CD8-positive, alpha-beta T cell (primary cell): ENCODE measurements at regions of chr1 and their contacts with region 1.

Region 1: DNA sequence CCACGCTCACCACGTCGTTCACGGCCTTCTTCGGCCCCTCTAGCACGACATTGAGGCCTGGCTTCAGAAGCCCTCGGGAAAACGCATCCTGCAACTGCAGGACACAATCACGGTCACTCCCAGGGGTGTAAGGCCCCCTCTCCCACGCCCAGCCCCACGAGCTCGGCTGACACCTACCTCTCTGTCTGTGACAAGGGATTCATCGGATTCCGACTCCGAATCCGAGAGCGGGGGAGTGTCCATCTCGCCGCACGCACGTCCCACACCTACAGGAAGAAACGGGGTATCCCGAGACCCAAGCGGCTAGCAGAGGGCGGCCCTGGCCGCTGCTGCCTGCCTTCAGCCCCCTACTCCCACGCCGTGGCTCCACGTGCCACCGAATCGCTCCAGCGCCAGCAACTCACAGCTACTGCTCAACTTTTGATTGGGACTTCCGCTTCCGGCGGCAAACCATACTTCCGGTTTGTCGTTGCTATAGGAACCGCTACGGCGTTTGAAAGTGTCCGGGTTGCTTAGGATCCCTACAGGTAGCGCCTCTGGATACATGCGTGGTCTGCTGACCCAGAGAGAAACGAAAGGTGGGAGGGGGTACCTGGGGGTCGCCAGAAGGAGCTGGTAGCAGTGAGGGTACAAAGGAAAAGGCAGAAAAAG is at the starts of genes CFAP57 and EBNA1BP2:
- DNase-seq: peak; percentile 83 to 96 (median 91)
- ATAC-seq: peak; percentile 67
- H3K4me3 ChIP-seq: peak within 1 kb of the TSS; percentile 89 to 93
- H3K4me3 Mint-ChIP-seq: peak within 1 kb of the TSS; percentile 100
- H3K27ac ChIP-seq: peak within 1 kb of the TSS; percentile 73 to 80
- H3K27ac Mint-ChIP-seq: peak within 1 kb of the TSS; percentile 93
- H3K4me1 ChIP-seq: peaks cover 12% of the 10 kb centered on the region
- H3K4me1 Mint-ChIP-seq: peaks cover 32% of the 10 kb centered on the region
- H3K27me3 ChIP-seq: peaks cover 0 to 4% of the 10 kb centered on the region in 2 experiments
- H3K27me3 Mint-ChIP-seq: peaks cover 14% of the 10 kb centered on the region
- CTCF ChIP-seq: no peak
- total RNA-seq, gene CFAP57: not detected
- total RNA-seq, gene EBNA1BP2: 22.1 to 23.1 TPM

Region 2: GRCh38 chr1:42657971-42658879 is 513.8 kb before region 1 on chr1 and contains the start of gene PPIH:
- CTCF ChIA-PET with region 1: no interaction called
- POLR2A ChIA-PET with region 1: no interaction called
- intact Hi-C with region 1: loop called (anchors 2 to 5 kb)
- DNase-seq: peak; percentile 87 to 97 (median 95)
- ATAC-seq: peak; percentile 98
- H3K4me3 ChIP-seq: peak within 1 kb of the TSS; percentile 78 to 90
- H3K4me3 Mint-ChIP-seq: peak within 1 kb of the TSS; percentile 99
- H3K27ac ChIP-seq: peak within 1 kb of the TSS; percentile 54 to 81
- H3K27ac Mint-ChIP-seq: peak within 1 kb of the TSS; percentile 87
- H3K4me1 ChIP-seq: peaks cover 24% of the 10 kb centered on the region
- H3K4me1 Mint-ChIP-seq: peaks cover 45% of the 10 kb centered on the region
- H3K27me3 ChIP-seq: no peaks in the 10 kb centered on the region
- H3K27me3 Mint-ChIP-seq: no peaks in the 10 kb centered on the region
- CTCF ChIP-seq: no peak
- total RNA-seq, gene PPIH: 31.0 to 33.2 TPM

Region 3: GRCh38 chr1:42816585-42817434 is 355.2 kb before region 1 on chr1 and contains the starts of genes ERMAP and SVBP:
- CTCF ChIA-PET with region 1: no interaction called
- POLR2A ChIA-PET with region 1: no interaction called
- intact Hi-C with region 1: loop called (anchors 1 kb)
- DNase-seq: peak; percentile 85 to 98 (median 95)
- ATAC-seq: peak; percentile 91
- H3K4me3 ChIP-seq: peak within 1 kb of the TSS; percentile 63 to 88
- H3K4me3 Mint-ChIP-seq: peak within 1 kb of the TSS; percentile 80
- H3K27ac ChIP-seq: peak within 1 kb of the TSS; percentile 69 to 89
- H3K27ac Mint-ChIP-seq: peak within 1 kb of the TSS; percentile 85
- H3K4me1 ChIP-seq: peaks cover 16% of the 10 kb centered on the region
- H3K4me1 Mint-ChIP-seq: peaks cover 27% of the 10 kb centered on the region
- H3K27me3 ChIP-seq: no peaks in the 10 kb centered on the region
- H3K27me3 Mint-ChIP-seq: no peaks in the 10 kb centered on the region
- CTCF ChIP-seq: no peak
- total RNA-seq, gene ERMAP: 3.0 to 3.3 TPM
- total RNA-seq, gene SVBP: 17.6 to 18.3 TPM

Region 4: DNA sequence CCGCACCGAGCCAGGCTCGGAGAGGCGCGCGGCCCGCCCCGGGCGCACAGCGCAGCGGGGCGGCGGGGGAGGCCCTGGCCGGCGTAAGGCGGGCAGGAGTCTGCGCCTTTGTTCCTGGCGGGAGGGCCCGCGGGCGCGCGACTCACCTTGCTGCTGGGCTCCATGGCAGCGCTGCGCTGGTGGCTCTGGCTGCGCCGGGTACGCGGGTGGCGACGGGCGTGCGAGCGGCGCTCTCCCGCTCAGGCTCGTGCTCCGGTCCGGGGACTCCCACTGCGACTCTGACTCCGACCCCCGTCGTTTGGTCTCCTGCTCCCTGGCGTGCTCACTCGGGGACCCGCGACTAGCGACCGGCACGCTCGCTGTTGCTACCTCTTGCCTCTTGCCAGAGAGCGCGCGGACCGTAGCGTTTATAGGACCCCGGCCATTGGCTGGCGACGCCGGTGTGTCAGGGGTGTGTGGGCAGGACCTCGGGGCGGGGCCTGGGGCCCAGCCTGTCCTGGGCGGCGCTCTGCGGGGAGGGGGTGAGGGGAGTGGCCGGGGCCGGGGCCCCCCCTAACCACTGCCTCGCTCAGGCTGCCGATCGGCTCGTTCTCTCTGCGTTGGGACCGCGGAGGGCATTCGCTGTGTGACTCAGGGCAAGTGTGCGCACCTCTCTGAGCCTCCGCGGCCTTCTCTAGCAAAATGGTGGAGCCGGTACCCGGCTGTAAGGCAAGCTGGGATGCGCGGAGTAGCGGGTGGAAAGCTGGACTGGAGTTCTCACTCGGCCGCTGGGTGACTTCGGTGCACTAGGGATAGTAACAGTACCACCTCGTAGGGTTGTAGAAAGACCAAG is 213.3 kb before region 1 on chr1 and contains the start of gene SLC2A1:
- CTCF ChIA-PET with region 1: no interaction called
- POLR2A ChIA-PET with region 1: no interaction called
- intact Hi-C with region 1: loop called in 1 of 2 experiments (anchors 2 kb)
- DNase-seq: peak; percentile 92 to 98 (median 96)
- ATAC-seq: peak; percentile 90
- H3K4me3 ChIP-seq: peak within 1 kb of the TSS; percentile 79 to 96
- H3K4me3 Mint-ChIP-seq: peak within 1 kb of the TSS; percentile 98
- H3K27ac ChIP-seq: peak within 1 kb of the TSS; percentile 76 to 86
- H3K27ac Mint-ChIP-seq: peak within 1 kb of the TSS; percentile 99
- H3K4me1 ChIP-seq: peaks cover 42% of the 10 kb centered on the region
- H3K4me1 Mint-ChIP-seq: peaks cover 51% of the 10 kb centered on the region
- H3K27me3 ChIP-seq: no peaks in the 10 kb centered on the region
- H3K27me3 Mint-ChIP-seq: no peaks in the 10 kb centered on the region
- CTCF ChIP-seq: no peak
- total RNA-seq, gene SLC2A1: 85.0 to 97.2 TPM

Region 5: GRCh38 chr1:43389326-43390313 is 217.6 kb after region 1 on chr1 and contains the starts of genes MED8 and SZT2:
- CTCF ChIA-PET with region 1: interaction called, 3 read pairs
- POLR2A ChIA-PET with region 1: no interaction called
- intact Hi-C with region 1: loop called in 1 of 2 experiments (anchors 2 kb)
- DNase-seq: peak; percentile 86 to 96 (median 92)
- ATAC-seq: peak; percentile 91
- H3K4me3 ChIP-seq: peak within 1 kb of the TSS; percentile 81 to 91
- H3K4me3 Mint-ChIP-seq: peak within 1 kb of the TSS; percentile 99
- H3K27ac ChIP-seq: peak within 1 kb of the TSS; percentile 70 to 86
- H3K27ac Mint-ChIP-seq: peak within 1 kb of the TSS; percentile 98
- H3K4me1 ChIP-seq: peaks cover 26% of the 10 kb centered on the region
- H3K4me1 Mint-ChIP-seq: peaks cover 57% of the 10 kb centered on the region
- H3K27me3 ChIP-seq: no peaks in the 10 kb centered on the region
- H3K27me3 Mint-ChIP-seq: no peaks in the 10 kb centered on the region
- CTCF ChIP-seq: no peak
- total RNA-seq, gene MED8: 18.8 to 20.2 TPM
- total RNA-seq, gene SZT2: 57.0 to 64.4 TPM

Region 6: DNA sequence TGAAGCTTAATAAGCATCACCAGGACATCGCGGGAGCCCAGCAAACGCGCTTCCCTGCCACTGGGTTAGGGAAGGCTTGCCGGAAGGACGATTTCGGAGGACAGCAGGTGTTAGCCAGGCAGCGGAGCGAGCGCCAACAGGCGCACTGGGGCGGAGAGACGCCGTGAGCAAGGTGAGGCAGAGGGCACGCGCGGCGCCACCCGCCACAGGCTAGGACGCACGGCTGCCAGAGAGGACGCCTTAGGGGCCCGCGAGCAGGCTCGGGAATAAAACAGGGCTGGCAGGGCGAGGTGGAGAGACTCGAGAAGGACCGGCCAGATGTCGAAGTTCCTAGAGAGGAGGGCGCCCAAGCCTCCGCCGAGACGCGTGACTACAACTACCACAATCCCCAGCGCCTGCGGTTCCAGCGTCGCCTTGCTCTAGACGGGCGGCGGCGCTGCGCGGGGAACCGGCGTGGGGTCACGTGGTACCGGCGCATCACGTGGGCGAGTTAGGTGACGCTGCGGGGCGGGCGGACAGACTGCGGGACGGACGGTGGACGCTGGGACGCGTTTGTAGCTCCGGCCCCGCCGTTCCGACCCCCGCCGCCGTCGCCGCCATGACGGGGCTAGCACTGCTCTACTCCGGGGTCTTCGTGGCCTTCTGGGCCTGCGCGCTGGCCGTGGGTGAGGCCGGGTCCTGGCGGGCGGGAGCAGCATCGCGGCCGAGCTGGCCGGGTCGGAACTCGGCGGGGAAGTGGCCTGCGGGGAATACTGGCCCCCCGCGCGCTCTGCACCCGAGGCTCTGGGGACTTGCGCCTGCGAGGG is 802.6 kb after region 1 on chr1 and contains the start of gene ATP6V0B:
- CTCF ChIA-PET with region 1: no interaction called
- POLR2A ChIA-PET with region 1: no interaction called
- intact Hi-C with region 1: loop called in 1 of 2 experiments (anchors 5 kb)
- DNase-seq: peak; percentile 83 to 96 (median 93)
- ATAC-seq: peak; percentile 69
- H3K4me3 ChIP-seq: peak within 1 kb of the TSS; percentile 95 to 97
- H3K4me3 Mint-ChIP-seq: peak within 1 kb of the TSS; percentile 92
- H3K27ac ChIP-seq: peak within 1 kb of the TSS; percentile 69 to 88
- H3K27ac Mint-ChIP-seq: peak within 1 kb of the TSS; percentile 95
- H3K4me1 ChIP-seq: peaks cover 37% of the 10 kb centered on the region
- H3K4me1 Mint-ChIP-seq: peaks cover 60% of the 10 kb centered on the region
- H3K27me3 ChIP-seq: no peaks in the 10 kb centered on the region
- H3K27me3 Mint-ChIP-seq: peaks cover 2% of the 10 kb centered on the region
- CTCF ChIP-seq: no peak
- total RNA-seq, gene ATP6V0B: 52.0 to 56.3 TPM

Region 7: GRCh38 chr1:45011837-45012638 is 1840.0 kb after region 1 on chr1 and contains the start of gene UROD:
- CTCF ChIA-PET with region 1: no interaction called
- POLR2A ChIA-PET with region 1: no interaction called
- intact Hi-C with region 1: loop called in 1 of 2 experiments (anchors 10 kb)
- DNase-seq: peak; percentile 77 to 96 (median 86)
- ATAC-seq: peak; percentile 83
- H3K4me3 ChIP-seq: peak within 1 kb of the TSS; percentile 56 to 82
- H3K4me3 Mint-ChIP-seq: peak within 1 kb of the TSS; percentile 89
- H3K27ac ChIP-seq: peak within 1 kb of the TSS; percentile 61 to 77
- H3K27ac Mint-ChIP-seq: peak within 1 kb of the TSS; percentile 95
- H3K4me1 ChIP-seq: peaks cover 30% of the 10 kb centered on the region
- H3K4me1 Mint-ChIP-seq: peaks cover 52% of the 10 kb centered on the region
- H3K27me3 ChIP-seq: no peaks in the 10 kb centered on the region
- H3K27me3 Mint-ChIP-seq: no peaks in the 10 kb centered on the region
- CTCF ChIP-seq: no peak
- total RNA-seq, gene UROD: 38.3 to 41.2 TPM